A549 (cell line): ENCODE measurements at regions of chr9 and their contacts with region 1.

Region 1: DNA sequence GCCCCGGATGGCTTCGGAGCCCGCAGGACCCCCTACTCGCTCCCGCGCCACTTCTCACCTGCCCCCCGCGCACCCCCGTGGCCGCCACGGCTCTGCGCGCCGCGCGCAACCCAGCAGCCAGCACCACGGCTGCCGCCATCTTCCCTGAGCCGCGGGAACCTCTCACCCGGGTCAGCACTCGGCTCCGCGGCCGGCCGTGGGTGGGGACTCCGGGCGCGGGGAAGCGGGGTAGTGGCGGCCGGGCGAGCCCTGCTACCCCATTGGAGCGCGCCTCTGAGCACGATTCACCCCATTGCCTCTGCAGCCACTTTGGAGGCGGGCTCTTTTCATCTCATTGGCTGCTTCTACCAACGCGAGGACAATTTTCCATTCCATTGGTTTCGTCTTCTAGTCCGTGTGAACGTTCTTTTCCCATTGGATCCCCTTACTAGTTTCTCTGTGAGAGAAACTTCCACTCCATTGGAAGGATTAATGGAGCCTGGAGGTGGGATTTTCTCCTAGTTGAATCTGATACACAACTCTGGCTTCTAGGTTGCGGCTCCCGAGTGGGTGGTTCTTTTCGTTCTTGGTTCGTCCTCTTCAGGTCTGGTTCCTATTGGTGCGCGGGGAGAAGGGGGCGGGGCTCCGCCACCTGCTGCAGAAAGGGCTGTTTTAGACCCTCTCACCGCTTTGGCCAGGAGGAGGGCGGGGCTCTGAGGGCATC is at the start of gene HINT2:
- DNase-seq: peak; percentile 98
- ATAC-seq: peak; percentile 86 to 92
- H3K4me3 ChIP-seq: peak within 1 kb of the TSS; percentile 73
- H3K27ac ChIP-seq: peak within 1 kb of the TSS; percentile 94 to 96
- H3K4me1 ChIP-seq: peaks cover 21% of the 10 kb centered on the region
- CTCF ChIP-seq: no peak
- EP300 ChIP-seq: no peak
- POLR2A ChIP-seq: peak; percentile 88
- RAD21 ChIP-seq: 0 out of 5 replicates have a peak, but pooled peaks of 1 of the 2 experiments have one; percentile 2
- polyA plus RNA-seq, gene HINT2: 46.9 and 47.3 TPM in 2 replicates

Region 2: DNA sequence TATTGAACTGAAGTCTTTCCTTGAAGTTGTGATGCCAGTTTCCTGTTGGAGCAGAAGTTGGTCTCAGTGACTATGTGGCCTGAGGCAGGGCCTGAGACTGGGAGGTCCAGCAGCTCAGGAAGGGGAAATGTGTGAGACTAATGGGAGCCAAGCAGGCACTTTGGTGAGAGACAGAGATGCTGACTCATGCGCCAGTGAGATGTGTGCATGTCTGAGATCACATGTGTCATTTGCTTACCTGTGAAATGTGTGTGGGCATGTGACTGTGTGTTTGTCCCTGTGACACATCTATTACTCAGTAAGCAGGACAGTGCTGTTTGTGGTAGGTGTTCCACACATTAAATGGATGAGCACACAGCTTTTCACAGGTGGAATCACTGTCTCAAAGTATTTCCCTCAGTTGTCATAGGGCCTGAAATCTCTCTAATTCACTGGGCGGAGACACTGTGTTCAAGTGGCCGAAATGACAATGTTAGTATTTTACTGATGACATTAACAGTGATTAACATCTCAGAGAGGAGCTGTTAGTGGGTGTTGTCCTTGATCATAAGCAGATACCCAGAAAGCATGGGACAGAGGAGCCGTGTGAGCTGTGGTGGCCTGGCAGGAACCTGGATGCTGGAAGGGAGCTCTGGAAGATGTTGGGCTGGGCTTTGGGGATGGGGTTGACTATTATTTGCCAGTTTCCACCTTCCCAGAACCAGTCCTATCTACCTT is 16.2 kb before region 1 on chr9:
- CTCF ChIA-PET with region 1: interaction called, 19 read pairs
- POLR2A ChIA-PET with region 1: interaction called, 4 read pairs
- DNase-seq: peak in 1 of 2 experiments; percentile 54
- ATAC-seq: peak; percentile 46 to 63; a peak in 5 of 6 replicates
- H3K4me3 ChIP-seq: no peak overlapping the region
- H3K27ac ChIP-seq: peak overlapping the region; percentile 8 to 18; a peak in 3 of 6 replicates
- H3K4me1 ChIP-seq: peaks cover 33% of the 10 kb centered on the region
- CTCF ChIP-seq: no peak
- EP300 ChIP-seq: no peak
- POLR2A ChIP-seq: no peak
- RAD21 ChIP-seq: no peak